ENCODE measurements at regions of chr7 and their contacts with region 1.

Region 1: GRCh38 chr7:21253740-21254687 is 173.9 kb upstream of the SP4 start:
- DNase-seq: peak; percentile 69
- H3K4me3 Mint-ChIP-seq: no peak overlapping the region
- H3K27ac Mint-ChIP-seq: no peak overlapping the region
- H3K4me1 Mint-ChIP-seq: no peaks in the 10 kb centered on the region
- H3K27me3 Mint-ChIP-seq: peaks cover 10% of the 10 kb centered on the region
- CTCF ChIP-seq: peak; percentile 58

Region 2: DNA sequence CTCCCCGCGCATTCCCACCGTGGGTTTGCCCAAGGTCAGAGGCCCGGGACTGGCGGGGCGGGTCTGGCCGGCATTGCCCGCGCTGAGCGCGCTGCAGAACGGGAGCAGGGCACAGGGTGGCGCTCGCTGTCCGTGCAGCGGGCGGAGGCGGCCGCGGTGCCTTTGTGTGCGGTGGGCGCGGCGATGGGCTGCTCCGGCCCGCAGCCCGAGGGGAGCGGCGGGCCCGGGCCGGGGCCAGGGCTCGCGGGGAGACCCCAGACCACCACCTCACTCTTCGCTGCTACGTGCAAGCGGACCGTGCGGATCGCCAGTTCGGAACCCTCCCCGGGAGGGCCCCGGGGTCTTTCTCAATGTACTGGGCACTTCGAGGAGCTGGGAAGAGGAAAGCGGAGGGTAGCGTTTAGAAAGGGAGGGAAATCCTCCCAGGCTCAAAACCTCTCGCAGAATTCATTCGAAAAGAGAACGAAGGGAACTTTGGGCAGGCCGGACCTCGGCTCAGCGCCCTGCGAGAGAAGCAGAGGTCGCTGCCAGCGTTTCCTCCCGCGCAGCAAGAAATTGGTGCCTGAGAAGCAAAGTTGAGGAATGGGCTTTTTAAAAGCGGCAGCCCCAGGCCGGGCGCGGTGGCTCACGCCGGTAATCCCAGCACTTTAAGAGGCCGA is 475.8 kb before region 1 on chr7:
- CTCF ChIA-PET with region 1: interaction called, 125 read pairs
- POLR2A ChIA-PET with region 1: interaction called, 4 read pairs
- intact Hi-C with region 1: loop called (anchors 1 kb)
- DNase-seq: peak; percentile 21
- H3K4me3 Mint-ChIP-seq: peak overlapping the region; percentile 58
- H3K27ac Mint-ChIP-seq: no peak overlapping the region
- H3K4me1 Mint-ChIP-seq: peaks cover 10% of the 10 kb centered on the region
- H3K27me3 Mint-ChIP-seq: peaks cover 37% of the 10 kb centered on the region
- CTCF ChIP-seq: peak; percentile 81

Region 3: DNA sequence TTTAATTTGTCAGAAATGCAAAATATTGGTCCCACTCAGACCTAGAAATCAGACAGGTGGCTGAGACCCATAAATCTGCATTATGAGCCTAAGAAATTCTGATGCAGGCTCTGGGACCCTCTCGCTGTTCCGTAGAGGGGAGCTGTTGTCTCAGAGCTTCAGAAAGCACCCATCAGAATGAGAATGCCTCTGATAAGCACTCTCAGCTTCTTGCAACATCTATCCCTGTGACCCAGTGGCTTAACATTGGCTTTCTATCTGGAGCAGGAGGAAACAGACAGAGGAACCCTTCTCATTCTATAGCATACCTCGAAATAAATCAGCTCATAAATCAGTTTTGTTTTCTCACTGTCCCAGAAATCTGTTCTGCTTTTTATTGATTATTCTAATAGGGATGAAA is 10.7 kb before region 1 on chr7:
- CTCF ChIA-PET with region 1: interaction called, 10 read pairs
- POLR2A ChIA-PET with region 1: no interaction called
- intact Hi-C with region 1: no loop called
- DNase-seq: no peak
- H3K4me3 Mint-ChIP-seq: no peak overlapping the region
- H3K27ac Mint-ChIP-seq: no peak overlapping the region
- H3K4me1 Mint-ChIP-seq: no peaks in the 10 kb centered on the region
- H3K27me3 Mint-ChIP-seq: no peaks in the 10 kb centered on the region
- CTCF ChIP-seq: no peak

Region 4: GRCh38 chr7:21507626-21508343 is 253.8 kb after region 1 on chr7:
- CTCF ChIA-PET with region 1: interaction called, 5 read pairs
- POLR2A ChIA-PET with region 1: interaction called, 3 read pairs
- intact Hi-C with region 1: loop called (anchors 1 kb)
- DNase-seq: peak; percentile 58
- H3K4me3 Mint-ChIP-seq: no peak overlapping the region
- H3K27ac Mint-ChIP-seq: no peak overlapping the region
- H3K4me1 Mint-ChIP-seq: no peaks in the 10 kb centered on the region
- H3K27me3 Mint-ChIP-seq: no peaks in the 10 kb centered on the region
- CTCF ChIP-seq: peak; percentile 54

Region 5: GRCh38 chr7:21767300-21767900 is 513.4 kb after region 1 on chr7:
- CTCF ChIA-PET with region 1: interaction called, 72 read pairs
- POLR2A ChIA-PET with region 1: interaction called, 3 read pairs
- intact Hi-C with region 1: loop called (anchors 1 kb)
- DNase-seq: peak; percentile 88
- H3K4me3 Mint-ChIP-seq: no peak overlapping the region
- H3K27ac Mint-ChIP-seq: no peak overlapping the region
- H3K4me1 Mint-ChIP-seq: no peaks in the 10 kb centered on the region
- H3K27me3 Mint-ChIP-seq: peaks cover 10% of the 10 kb centered on the region
- CTCF ChIP-seq: peak; percentile 85